Gastrocnemius medialis (tissue), 4 donors: ENCODE measurements at regions of chr22 and their contacts with region 1.

Region 1: GRCh38 chr22:27668828-27669797 is 132.4 kb downstream of the MN1 start:
- DNase-seq: peak; percentile 95 to 99
- ATAC-seq: peak; percentile 84 to 86
- H3K4me3 ChIP-seq: no peak overlapping the region
- H3K27ac ChIP-seq: peak overlapping the region; percentile 88 to 91 (median 90)
- H3K4me1 ChIP-seq: peaks cover 31 to 38% of the 10 kb centered on the region in 2 donors
- H3K27me3 ChIP-seq: no peaks in the 10 kb centered on the region
- CTCF ChIP-seq: no peak
- POLR2A ChIP-seq: peak; percentile 82 to 88

Region 2: GRCh38 chr22:27686534-27686933 is 17.4 kb after region 1 on chr22:
- in situ Hi-C with region 1: no loop called
- intact Hi-C with region 1: loop called (anchors 1 kb)
- DNase-seq: peak; percentile 86 to 96
- ATAC-seq: peak; percentile 87 to 88
- H3K4me3 ChIP-seq: no peak overlapping the region
- H3K27ac ChIP-seq: peak overlapping the region; percentile 93 to 98 (median 96)
- H3K4me1 ChIP-seq: peaks cover 25% of the 10 kb centered on the region in 2 donors
- H3K27me3 ChIP-seq: no peaks in the 10 kb centered on the region
- CTCF ChIP-seq: no peak
- POLR2A ChIP-seq: peak; percentile 57 to 58

Region 3: GRCh38 chr22:27697888-27698287 is 28.8 kb after region 1 on chr22:
- in situ Hi-C with region 1: no loop called
- intact Hi-C with region 1: loop called (anchors 1 kb)
- DNase-seq: peak; percentile 82 to 95
- ATAC-seq: peak; percentile 88 to 93
- H3K4me3 ChIP-seq: no peak overlapping the region
- H3K27ac ChIP-seq: peak overlapping the region; percentile 87 to 96 (median 90)
- H3K4me1 ChIP-seq: peaks cover 22 to 30% of the 10 kb centered on the region in 2 donors
- H3K27me3 ChIP-seq: no peaks in the 10 kb centered on the region
- CTCF ChIP-seq: no peak
- POLR2A ChIP-seq: peak in 1 of 2 donors; percentile 25